WTC11 (cell line): ENCODE measurements at regions of chr2 and their contacts with region 1.

Region 1: DNA sequence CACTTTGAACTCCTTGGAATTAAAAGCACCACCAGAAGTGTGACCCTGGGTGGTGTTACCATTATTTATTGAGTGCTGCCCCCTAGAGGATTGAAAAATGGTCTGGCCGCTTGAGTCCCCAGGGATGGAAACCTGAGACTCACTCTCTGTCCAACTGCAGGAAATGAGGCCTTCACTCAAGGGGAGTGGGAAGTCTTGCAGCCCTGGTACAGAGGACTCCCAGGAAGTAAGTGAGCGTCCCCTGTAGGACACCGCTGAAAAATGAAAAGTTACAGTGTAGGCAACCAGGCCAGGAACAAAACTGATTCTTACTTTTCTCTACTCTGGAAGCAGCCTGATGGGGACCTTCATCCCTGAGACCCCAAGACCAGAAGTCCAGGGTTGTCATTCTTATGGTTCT is 2.2 kb upstream of the NRP2 start:
- DNase-seq: peak; percentile 77
- ATAC-seq: peak; percentile 78
- H3K4me3 Mint-ChIP-seq: no peak overlapping the region
- H3K27ac Mint-ChIP-seq: no peak overlapping the region; the same call in 1 of the 2 replicates
- H3K4me1 Mint-ChIP-seq: peaks cover 59% of the 10 kb centered on the region
- H3K27me3 Mint-ChIP-seq: peaks cover 37% of the 10 kb centered on the region
- CTCF ChIP-seq: peak; percentile 50

Region 2: DNA sequence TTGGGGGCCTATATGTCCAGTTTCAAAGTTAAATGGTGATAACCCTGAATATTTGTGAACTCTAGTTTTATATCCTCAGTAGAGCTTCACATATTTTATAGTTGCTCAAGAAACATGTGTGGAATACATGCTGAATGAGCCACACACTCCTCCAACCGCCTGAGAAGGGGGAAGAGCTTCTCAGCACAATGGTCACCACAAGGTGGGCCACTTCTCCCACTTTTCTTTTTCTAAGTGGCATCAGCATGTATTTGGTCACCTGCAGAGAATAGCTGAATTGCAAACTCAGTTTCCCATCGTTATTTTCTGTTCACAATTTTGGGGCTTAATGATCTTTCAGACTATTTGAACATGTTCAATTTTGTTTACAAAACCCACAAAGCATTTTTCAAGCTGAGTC is 794.3 kb before region 1 on chr2:
- CTCF ChIA-PET with region 1: interaction called, 13 read pairs
- POLR2A ChIA-PET with region 1: no interaction called
- DNase-seq: peak; percentile 34
- ATAC-seq: peak; percentile 78
- H3K4me3 Mint-ChIP-seq: no peak overlapping the region
- H3K27ac Mint-ChIP-seq: no peak overlapping the region
- H3K4me1 Mint-ChIP-seq: peaks cover 34% of the 10 kb centered on the region
- H3K27me3 Mint-ChIP-seq: no peaks in the 10 kb centered on the region
- CTCF ChIP-seq: 0 out of 2 replicates have a peak, but pooled peaks have one; percentile 26

Region 3: GRCh38 chr2:205323929-205324328 is 356.1 kb before region 1 on chr2:
- CTCF ChIA-PET with region 1: interaction called, 17 read pairs
- POLR2A ChIA-PET with region 1: no interaction called
- DNase-seq: no peak
- ATAC-seq: peak; percentile 77
- H3K4me3 Mint-ChIP-seq: no peak overlapping the region
- H3K27ac Mint-ChIP-seq: no peak overlapping the region
- H3K4me1 Mint-ChIP-seq: peaks cover 14% of the 10 kb centered on the region
- H3K27me3 Mint-ChIP-seq: no peaks in the 10 kb centered on the region
- CTCF ChIP-seq: peak; percentile 57

Region 4: DNA sequence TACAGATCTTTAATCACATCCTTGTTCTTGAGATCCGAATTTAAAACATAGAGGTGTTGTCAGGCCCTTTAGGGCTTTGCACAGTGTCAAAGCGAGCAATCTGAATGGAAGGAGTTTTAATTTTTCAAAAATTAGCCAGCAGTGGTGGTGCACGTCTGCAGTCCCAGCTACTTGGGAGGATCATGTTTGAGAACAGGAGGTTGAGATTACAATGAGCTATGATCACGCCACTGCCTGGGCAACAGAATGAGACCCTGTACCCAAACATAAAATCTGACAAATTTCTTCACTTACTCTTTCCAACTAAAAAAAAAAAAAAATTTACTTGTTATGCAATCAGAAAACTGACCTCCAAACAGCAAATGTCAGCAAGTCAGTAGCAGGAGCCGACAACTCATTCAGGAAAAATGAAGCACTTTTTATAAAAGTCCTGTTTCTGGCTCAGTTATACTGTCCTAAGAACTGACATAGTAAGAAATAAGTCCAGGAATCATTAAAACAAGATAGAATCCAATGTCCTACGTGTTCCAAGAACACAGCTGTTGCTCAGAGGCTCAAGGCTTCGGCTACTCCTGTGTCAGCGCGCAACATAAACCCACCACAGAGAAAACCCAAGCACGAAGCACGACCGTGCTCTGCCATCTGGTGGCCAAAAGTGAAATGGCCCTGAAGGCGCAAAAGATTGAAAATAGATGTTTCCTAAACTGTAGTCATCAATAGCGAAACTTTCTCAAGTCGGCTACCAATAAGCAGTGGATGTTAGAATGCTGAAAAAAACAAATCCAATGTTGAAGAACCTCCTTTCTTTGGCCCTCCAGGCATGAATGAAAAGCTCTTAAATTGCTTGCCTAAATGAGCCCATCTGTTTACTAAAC is 267.8 kb after region 1 on chr2:
- CTCF ChIA-PET with region 1: no interaction called
- POLR2A ChIA-PET with region 1: no interaction called
- DNase-seq: peak; percentile 73
- ATAC-seq: peak; percentile 78
- H3K4me3 Mint-ChIP-seq: no peak overlapping the region
- H3K27ac Mint-ChIP-seq: no peak overlapping the region
- H3K4me1 Mint-ChIP-seq: peaks cover 23% of the 10 kb centered on the region
- H3K27me3 Mint-ChIP-seq: no peaks in the 10 kb centered on the region
- CTCF ChIP-seq: peak; percentile 77